ENCODE measurements at regions of chr5 and their contacts with region 1.

Region 1: GRCh38 chr5:97142521-97143254 is at the start of gene LIX1:
- DNase-seq: peak; percentile 63 to 66
- H3K4me3 ChIP-seq: no peak within 1 kb of the TSS
- H3K4me3 Mint-ChIP-seq: peak within 1 kb of the TSS; percentile 63
- H3K27ac Mint-ChIP-seq: peak within 1 kb of the TSS; percentile 29
- H3K4me1 ChIP-seq: peaks cover 12% of the 10 kb centered on the region
- H3K4me1 Mint-ChIP-seq: peaks cover 16% of the 10 kb centered on the region
- H3K27me3 ChIP-seq: no peaks in the 10 kb centered on the region
- H3K27me3 Mint-ChIP-seq: no peaks in the 10 kb centered on the region
- CTCF ChIP-seq: peak; percentile 69 to 76
- total RNA-seq, gene LIX1: 4.0 and 4.1 TPM in 2 replicates

Region 2: DNA sequence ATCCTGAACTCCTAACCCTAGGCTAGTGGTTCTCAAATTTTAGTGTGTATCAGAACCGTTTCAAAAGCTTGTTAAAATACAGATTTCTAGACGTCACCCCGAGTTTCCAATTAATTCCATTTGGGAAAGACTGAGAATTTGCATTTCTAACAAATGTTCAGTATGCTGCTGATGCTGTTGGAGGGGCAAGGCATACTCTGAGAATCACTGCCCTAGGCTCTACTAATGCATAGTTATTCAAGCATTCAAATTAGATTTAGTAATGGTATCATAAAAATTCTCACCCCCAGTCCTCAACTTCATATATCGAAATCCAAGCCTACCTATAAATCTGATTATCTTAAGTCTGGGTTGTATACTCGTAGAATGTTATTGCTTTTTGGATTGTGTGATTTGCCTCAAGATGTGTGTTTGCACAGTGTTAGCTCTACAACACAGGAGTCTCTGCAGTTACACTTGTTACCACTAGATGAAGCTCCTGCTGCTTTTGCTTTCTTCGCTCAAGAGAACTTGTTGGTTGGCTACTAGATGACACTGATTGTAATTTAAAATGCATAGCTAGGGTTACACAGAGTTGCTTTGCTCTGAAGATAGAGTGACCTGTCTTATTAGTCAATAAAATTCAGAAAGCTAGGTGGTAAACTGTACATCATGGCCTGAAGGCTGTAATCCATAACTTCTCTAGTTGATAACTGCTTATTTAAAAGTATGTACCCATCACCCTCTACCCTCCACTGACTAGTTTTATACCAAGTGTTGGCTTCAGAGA is 273.9 kb before region 1 on chr5:
- CTCF ChIA-PET with region 1: interaction called, 39 read pairs
- POLR2A ChIA-PET with region 1: no interaction called
- intact Hi-C with region 1: loop called (anchors 1 kb)
- DNase-seq: peak in 1 of 2 experiments; percentile 59
- H3K4me3 ChIP-seq: no peak overlapping the region
- H3K4me3 Mint-ChIP-seq: no peak overlapping the region
- H3K27ac Mint-ChIP-seq: no peak overlapping the region
- H3K4me1 ChIP-seq: peaks cover 4% of the 10 kb centered on the region; the same call in 1 of the 2 replicates
- H3K4me1 Mint-ChIP-seq: peaks cover 3% of the 10 kb centered on the region
- H3K27me3 ChIP-seq: no peaks in the 10 kb centered on the region
- H3K27me3 Mint-ChIP-seq: no peaks in the 10 kb centered on the region
- CTCF ChIP-seq: peak; percentile 91 to 96

Region 3: DNA sequence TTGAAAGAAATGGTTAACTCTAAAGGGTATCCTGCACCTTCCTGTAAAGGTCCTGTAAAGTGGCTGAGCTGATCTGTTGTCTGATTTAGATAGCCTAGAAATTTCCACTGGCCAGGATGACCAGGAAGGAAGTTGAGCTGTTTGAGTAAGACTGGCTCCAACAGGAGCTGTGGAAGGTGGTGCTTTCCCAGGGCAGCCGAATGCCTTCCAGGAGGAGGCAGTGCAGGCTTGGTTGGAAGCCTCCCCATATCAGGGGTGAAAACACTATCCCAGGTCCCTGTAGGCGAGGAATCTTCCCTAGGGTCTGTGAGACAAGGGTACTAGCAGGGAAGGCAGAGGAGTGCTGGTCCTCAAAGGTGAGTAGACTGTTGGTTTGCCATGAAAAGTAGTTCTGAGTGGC is 98.6 kb before region 1 on chr5:
- CTCF ChIA-PET with region 1: interaction called, 35 read pairs
- POLR2A ChIA-PET with region 1: no interaction called
- intact Hi-C with region 1: loop called (anchors 1 kb)
- DNase-seq: peak; percentile 62 to 67
- H3K4me3 ChIP-seq: no peak overlapping the region
- H3K4me3 Mint-ChIP-seq: no peak overlapping the region
- H3K27ac Mint-ChIP-seq: peak overlapping the region; percentile 90
- H3K4me1 ChIP-seq: peaks cover 28% of the 10 kb centered on the region
- H3K4me1 Mint-ChIP-seq: peaks cover 37% of the 10 kb centered on the region
- H3K27me3 ChIP-seq: no peaks in the 10 kb centered on the region
- H3K27me3 Mint-ChIP-seq: no peaks in the 10 kb centered on the region
- CTCF ChIP-seq: peak; percentile 38 to 60

Region 4: DNA sequence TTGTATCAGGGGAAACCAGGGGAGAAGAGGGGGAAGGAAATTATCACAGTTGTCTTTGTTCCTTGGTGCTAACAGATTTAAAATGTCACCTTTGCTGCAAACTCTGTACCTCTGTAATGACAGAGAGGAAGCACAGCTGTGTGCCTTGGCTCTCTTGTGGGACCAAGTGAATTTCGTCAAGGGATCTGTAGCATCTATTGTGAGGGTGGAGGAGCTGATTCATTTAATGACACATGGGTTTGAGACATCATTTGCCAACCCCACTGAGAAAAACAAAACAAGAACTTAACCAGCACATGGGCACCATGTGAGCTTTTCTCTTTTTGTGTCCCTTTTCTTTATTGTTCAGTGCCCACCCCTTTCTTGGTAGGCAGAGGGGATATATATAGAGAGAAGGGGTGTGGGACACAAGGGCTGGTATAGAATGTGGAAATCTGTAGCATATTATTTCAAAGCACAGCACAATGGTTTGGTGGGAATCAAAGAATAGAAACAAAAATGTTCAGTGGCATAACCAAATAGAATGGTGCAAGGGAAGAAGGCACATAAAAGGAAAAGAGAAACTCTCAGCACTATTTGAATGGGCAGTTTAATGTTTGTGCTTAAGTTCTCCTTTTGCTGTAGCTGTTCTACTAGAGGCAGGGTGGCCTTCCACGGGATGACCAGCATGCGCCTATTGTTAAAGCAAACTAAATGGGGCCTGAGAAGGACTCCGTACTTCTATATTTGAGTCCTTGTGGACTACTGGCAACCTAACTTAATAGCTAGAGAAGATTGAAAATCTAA is 63.5 kb before region 1 on chr5:
- CTCF ChIA-PET with region 1: no interaction called
- POLR2A ChIA-PET with region 1: no interaction called
- intact Hi-C with region 1: loop called (anchors 1 kb)
- DNase-seq: no peak
- H3K4me3 ChIP-seq: no peak overlapping the region
- H3K4me3 Mint-ChIP-seq: no peak overlapping the region
- H3K27ac Mint-ChIP-seq: no peak overlapping the region
- H3K4me1 ChIP-seq: peaks cover 29% of the 10 kb centered on the region
- H3K4me1 Mint-ChIP-seq: peaks cover 25% of the 10 kb centered on the region
- H3K27me3 ChIP-seq: no peaks in the 10 kb centered on the region
- H3K27me3 Mint-ChIP-seq: no peaks in the 10 kb centered on the region
- CTCF ChIP-seq: no peak

Region 5: DNA sequence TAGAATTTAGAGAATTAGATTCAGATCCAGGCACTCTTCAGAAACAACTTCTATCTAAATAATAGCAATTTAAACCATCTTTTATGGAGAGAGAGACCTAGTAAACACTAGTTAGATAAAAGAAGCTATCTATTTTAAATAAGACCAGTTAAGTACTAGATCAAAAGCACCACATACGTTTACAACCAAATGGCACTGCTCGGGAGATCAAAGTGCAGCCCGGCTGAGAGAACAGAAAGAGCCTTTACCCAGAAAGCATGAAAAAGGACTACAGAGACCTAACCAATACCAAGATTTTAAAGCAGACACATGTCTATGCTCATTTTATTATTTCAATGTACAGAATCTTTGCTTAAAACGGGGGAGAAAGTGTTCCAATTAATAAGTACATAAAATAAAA is 31.1 kb before region 1 on chr5:
- CTCF ChIA-PET with region 1: interaction called, 3 read pairs
- POLR2A ChIA-PET with region 1: no interaction called
- intact Hi-C with region 1: loop called (anchors 1 kb)
- DNase-seq: peak; percentile 59 to 69
- H3K4me3 ChIP-seq: no peak overlapping the region
- H3K4me3 Mint-ChIP-seq: peak overlapping the region; percentile 3
- H3K27ac Mint-ChIP-seq: peak overlapping the region; percentile 3
- H3K4me1 ChIP-seq: peaks cover 27% of the 10 kb centered on the region
- H3K4me1 Mint-ChIP-seq: peaks cover 27% of the 10 kb centered on the region
- H3K27me3 ChIP-seq: no peaks in the 10 kb centered on the region
- H3K27me3 Mint-ChIP-seq: no peaks in the 10 kb centered on the region
- CTCF ChIP-seq: no peak

Region 6: DNA sequence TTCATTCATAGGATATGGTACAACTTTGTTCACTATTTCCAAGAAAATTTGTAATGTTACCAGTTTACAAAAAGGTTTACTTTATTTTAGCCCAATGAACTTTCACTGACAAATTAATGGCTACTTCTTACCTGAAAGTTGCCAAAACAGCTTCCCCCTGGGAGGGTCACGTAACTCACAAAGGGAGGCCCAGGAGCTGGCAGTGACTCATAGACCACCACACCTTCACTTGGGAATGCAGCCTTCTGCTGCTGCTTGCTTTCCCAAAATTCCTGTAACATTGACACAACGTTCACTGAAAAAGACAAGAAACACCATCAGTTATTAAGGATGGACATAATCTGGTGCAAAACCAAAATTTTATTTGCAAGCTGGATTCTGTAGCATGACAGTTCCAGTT is 18.4 kb before region 1 on chr5:
- CTCF ChIA-PET with region 1: no interaction called
- POLR2A ChIA-PET with region 1: no interaction called
- intact Hi-C with region 1: no loop called
- DNase-seq: no peak
- H3K4me3 ChIP-seq: no peak overlapping the region
- H3K4me3 Mint-ChIP-seq: no peak overlapping the region
- H3K27ac Mint-ChIP-seq: no peak overlapping the region
- H3K4me1 ChIP-seq: 0 out of 2 replicates have a peak, but pooled peaks cover 5% of the 10 kb centered on the region
- H3K4me1 Mint-ChIP-seq: no peaks in the 10 kb centered on the region
- H3K27me3 ChIP-seq: no peaks in the 10 kb centered on the region
- H3K27me3 Mint-ChIP-seq: no peaks in the 10 kb centered on the region
- CTCF ChIP-seq: no peak

Measured in Caco-2 (cell line).